CD8-positive, alpha-beta T cell (primary cell): ENCODE measurements at regions of chr3 and their contacts with region 1.

Region 1: GRCh38 chr3:57692259-57693147 is at the start of gene DENND6A:
- DNase-seq: peak; percentile 91 to 98 (median 96)
- ATAC-seq: peak; percentile 73
- H3K4me3 ChIP-seq: peak within 1 kb of the TSS; percentile 55 to 78
- H3K4me3 Mint-ChIP-seq: peak within 1 kb of the TSS; percentile 92
- H3K27ac ChIP-seq: peak within 1 kb of the TSS; percentile 69 to 95
- H3K27ac Mint-ChIP-seq: peak within 1 kb of the TSS; percentile 89
- H3K4me1 ChIP-seq: peaks cover 45% of the 10 kb centered on the region
- H3K4me1 Mint-ChIP-seq: peaks cover 42% of the 10 kb centered on the region
- H3K27me3 ChIP-seq: no peaks in the 10 kb centered on the region
- H3K27me3 Mint-ChIP-seq: no peaks in the 10 kb centered on the region
- CTCF ChIP-seq: no peak
- total RNA-seq, gene DENND6A: 74.6 to 79.3 TPM

Region 2: GRCh38 chr3:57555738-57556458 is 136.6 kb before region 1 on chr3 and contains the start of gene PDE12:
- CTCF ChIA-PET with region 1: interaction called, 6 read pairs
- POLR2A ChIA-PET with region 1: interaction called, 5 read pairs
- intact Hi-C with region 1: loop called (anchors 1 kb)
- DNase-seq: peak; percentile 66 to 91 (median 81)
- ATAC-seq: peak; percentile 69
- H3K4me3 ChIP-seq: peak within 1 kb of the TSS; percentile 77 to 96
- H3K4me3 Mint-ChIP-seq: peak within 1 kb of the TSS; percentile 88
- H3K27ac ChIP-seq: peak within 1 kb of the TSS; percentile 87 to 98
- H3K27ac Mint-ChIP-seq: peak within 1 kb of the TSS; percentile 99
- H3K4me1 ChIP-seq: peaks cover 31% of the 10 kb centered on the region
- H3K4me1 Mint-ChIP-seq: peaks cover 40% of the 10 kb centered on the region
- H3K27me3 ChIP-seq: no peaks in the 10 kb centered on the region
- H3K27me3 Mint-ChIP-seq: no peaks in the 10 kb centered on the region
- CTCF ChIP-seq: no peak
- total RNA-seq, gene PDE12: 44.8 to 45.9 TPM

Region 3: DNA sequence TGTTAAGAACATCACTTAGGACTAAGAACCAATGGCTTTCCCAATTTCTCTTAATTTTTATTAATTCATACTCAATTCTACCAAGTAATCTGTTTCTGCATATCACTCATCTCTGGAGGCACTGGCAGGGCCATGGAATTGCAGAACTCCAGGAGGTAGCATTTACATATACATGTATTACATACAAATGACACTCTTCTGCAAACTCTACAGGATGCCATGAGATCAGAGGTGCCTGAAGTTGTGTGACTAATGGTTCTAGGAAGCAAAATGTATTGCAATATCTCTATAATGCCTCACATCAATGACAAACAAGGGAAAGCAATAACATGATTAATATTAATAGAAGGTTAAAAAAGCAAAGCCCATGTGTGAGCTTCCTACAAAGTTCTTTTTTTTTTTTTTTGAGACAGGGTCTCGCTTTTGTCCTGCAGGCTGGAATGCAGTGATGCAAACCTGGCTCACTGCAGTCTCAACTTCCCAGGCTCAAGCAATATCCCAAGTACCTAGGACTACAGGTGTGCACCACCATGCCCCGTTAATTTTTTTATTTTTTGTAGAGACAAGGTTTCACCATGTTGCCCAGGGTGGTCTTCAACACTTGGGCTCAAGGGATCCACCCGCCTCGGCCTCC is 32.6 kb before region 1 on chr3:
- CTCF ChIA-PET with region 1: no interaction called
- POLR2A ChIA-PET with region 1: no interaction called
- intact Hi-C with region 1: loop called in 1 of 2 experiments (anchors 5 kb)
- DNase-seq: no peak
- ATAC-seq: no peak
- H3K4me3 ChIP-seq: no peak overlapping the region
- H3K4me3 Mint-ChIP-seq: no peak overlapping the region
- H3K27ac ChIP-seq: no peak overlapping the region
- H3K27ac Mint-ChIP-seq: no peak overlapping the region
- H3K4me1 ChIP-seq: no peaks in the 10 kb centered on the region
- H3K4me1 Mint-ChIP-seq: peaks cover 3% of the 10 kb centered on the region
- H3K27me3 ChIP-seq: no peaks in the 10 kb centered on the region
- H3K27me3 Mint-ChIP-seq: no peaks in the 10 kb centered on the region
- CTCF ChIP-seq: no peak

Region 4: GRCh38 chr3:57673156-57673555 is 19.3 kb before region 1 on chr3:
- CTCF ChIA-PET with region 1: no interaction called
- POLR2A ChIA-PET with region 1: interaction called, 11 read pairs
- intact Hi-C with region 1: loop called in 1 of 2 experiments (anchors 2 kb)
- DNase-seq: no peak
- ATAC-seq: no peak
- H3K4me3 ChIP-seq: no peak overlapping the region
- H3K4me3 Mint-ChIP-seq: no peak overlapping the region
- H3K27ac ChIP-seq: no peak overlapping the region
- H3K27ac Mint-ChIP-seq: peak overlapping the region; percentile 55
- H3K4me1 ChIP-seq: peaks cover 20% of the 10 kb centered on the region
- H3K4me1 Mint-ChIP-seq: peaks cover 50% of the 10 kb centered on the region
- H3K27me3 ChIP-seq: no peaks in the 10 kb centered on the region
- H3K27me3 Mint-ChIP-seq: no peaks in the 10 kb centered on the region
- CTCF ChIP-seq: no peak

Region 5: DNA sequence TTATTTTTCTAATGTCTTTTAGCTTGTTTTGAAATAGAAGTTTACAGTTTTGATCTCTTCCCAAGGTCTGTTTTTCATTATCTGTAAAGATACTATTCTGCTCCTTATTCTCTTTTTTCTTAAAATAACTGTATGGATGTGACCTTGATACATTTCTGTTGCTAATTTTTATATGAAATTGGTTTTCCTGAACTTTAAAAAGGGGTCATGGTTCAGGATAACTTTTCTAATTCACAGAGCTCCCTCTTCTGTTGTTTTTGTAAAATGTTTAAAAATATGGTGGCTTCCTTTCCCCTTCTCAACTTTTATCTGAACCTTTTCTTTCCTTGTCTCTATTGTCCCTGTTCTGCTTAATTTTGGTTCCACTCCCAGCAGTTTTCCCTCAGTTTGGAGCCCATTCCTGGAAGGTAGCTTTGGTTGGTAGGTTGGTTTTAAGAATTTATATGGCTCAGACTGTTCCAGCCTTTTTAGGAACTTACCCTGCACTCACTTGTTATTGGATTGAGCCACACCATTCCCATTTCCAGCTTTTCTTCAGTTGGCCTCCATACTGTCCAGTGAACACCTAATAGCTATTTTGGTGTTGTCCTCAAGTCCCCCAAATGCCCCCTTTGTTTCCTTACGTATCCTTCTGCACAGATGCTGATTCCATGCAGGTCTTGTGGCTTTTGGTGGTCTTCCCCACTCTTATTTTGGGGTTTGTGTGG is 133.9 kb after region 1 on chr3:
- CTCF ChIA-PET with region 1: interaction called, 3 read pairs
- POLR2A ChIA-PET with region 1: no interaction called
- intact Hi-C with region 1: loop called in 1 of 2 experiments (anchors 10 kb)
- DNase-seq: no peak
- ATAC-seq: no peak
- H3K4me3 ChIP-seq: no peak overlapping the region
- H3K4me3 Mint-ChIP-seq: no peak overlapping the region
- H3K27ac ChIP-seq: no peak overlapping the region
- H3K27ac Mint-ChIP-seq: no peak overlapping the region
- H3K4me1 ChIP-seq: no peaks in the 10 kb centered on the region
- H3K4me1 Mint-ChIP-seq: peaks cover 24% of the 10 kb centered on the region
- H3K27me3 ChIP-seq: no peaks in the 10 kb centered on the region
- H3K27me3 Mint-ChIP-seq: no peaks in the 10 kb centered on the region
- CTCF ChIP-seq: no peak